Activated T-helper 1 cell treated with anti-CD3 and anti-CD28 coated beads, Interleukin-12 subunit alpha, Interleukin-12 subunit beta, Interleukin-2, Interleukin-4 antibody, amounts not matched to agents 30 ng/mL and 10 ng/mL and 1 ng/mL, durations not matched to agents 14 hours and 24 hours and 36 hours (primary cell): ENCODE measurements at regions of chr7 and their contacts with region 1.

Region 1: GRCh38 chr7:73667344-73668102 is at the start of gene VPS37D:
- DNase-seq: peak; percentile 91
- H3K4me3 Mint-ChIP-seq: peak within 1 kb of the TSS; percentile 78
- H3K27ac Mint-ChIP-seq: no peak within 1 kb of the TSS
- H3K4me1 Mint-ChIP-seq: peaks cover 7% of the 10 kb centered on the region
- H3K27me3 Mint-ChIP-seq: peaks cover 36% of the 10 kb centered on the region
- total RNA-seq, gene VPS37D: 0.18 and 0.34 TPM in 2 replicates

Region 2: DNA sequence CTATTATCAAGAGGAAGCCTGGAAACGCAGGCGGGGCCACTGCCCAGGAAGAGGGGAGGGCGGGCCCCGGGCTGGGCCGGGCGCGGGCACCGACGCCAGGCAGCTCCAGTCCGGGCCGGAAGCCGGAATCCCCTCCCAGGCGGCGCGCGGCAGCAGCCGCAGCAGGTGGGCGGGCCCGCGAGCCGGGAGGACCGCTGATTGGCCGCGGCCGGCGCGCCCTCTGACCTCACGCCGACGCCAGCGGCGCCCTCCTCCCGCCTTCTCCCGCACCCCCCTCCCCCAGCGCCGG is 110.5 kb before region 1 on chr7:
- intact Hi-C with region 1: loop called (anchors 1 kb)
- DNase-seq: peak; percentile 92
- H3K4me3 Mint-ChIP-seq: peak overlapping the region; percentile 94
- H3K27ac Mint-ChIP-seq: peak overlapping the region; percentile 79
- H3K4me1 Mint-ChIP-seq: peaks cover 38% of the 10 kb centered on the region
- H3K27me3 Mint-ChIP-seq: peaks cover 8% of the 10 kb centered on the region

Region 3: GRCh38 chr7:73606801-73607691 is 60.5 kb before region 1 on chr7:
- intact Hi-C with region 1: loop called (anchors 1 kb)
- DNase-seq: peak; percentile 42
- H3K4me3 Mint-ChIP-seq: no peak overlapping the region
- H3K27ac Mint-ChIP-seq: no peak overlapping the region
- H3K4me1 Mint-ChIP-seq: no peaks in the 10 kb centered on the region
- H3K27me3 Mint-ChIP-seq: peaks cover 17% of the 10 kb centered on the region

Region 4: DNA sequence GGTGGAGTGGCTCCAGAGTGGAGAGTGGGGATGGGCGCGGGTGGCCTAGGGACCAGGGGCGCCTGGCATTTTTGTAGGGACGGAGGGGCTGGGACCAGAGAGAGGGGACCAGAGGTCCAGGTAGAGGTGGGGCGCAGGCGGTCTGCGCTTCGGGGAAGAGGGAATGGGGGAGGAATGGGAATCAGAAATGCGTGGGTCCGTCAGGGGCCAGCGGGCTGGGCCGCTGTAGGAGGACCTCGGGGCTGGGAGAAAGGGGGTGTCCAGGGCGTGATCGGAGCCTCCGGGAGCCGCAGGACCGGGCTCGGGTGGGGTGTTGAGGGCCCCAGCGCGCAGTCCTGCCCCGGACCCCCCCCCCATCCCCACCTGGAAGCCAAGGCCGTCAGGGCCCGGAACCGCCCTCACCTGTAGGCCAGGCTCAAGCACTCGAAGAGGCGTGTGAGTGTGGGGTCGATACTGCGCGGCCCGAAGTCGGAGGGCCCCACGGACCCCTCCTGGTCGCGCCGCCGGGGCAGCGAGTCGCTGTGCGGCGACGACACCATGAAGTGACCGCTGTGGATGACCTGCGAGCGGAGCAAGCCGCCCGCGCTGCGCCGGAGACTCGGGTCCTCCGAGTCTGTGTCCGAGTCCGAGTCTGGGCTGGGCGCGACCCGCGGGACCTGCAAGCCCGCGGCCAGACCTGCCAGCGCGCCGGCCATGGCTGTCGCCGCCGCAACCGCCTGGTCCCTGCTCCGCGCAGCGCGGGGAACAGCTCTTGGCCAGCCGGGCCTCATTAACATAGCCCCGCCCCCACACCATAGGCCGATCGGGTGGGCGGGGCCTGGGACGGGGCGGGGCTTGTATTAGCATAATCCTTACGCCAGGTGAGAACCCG is 43.5 kb before region 1 on chr7 and contains the start of gene MLXIPL:
- intact Hi-C with region 1: loop called (anchors 1 kb)
- DNase-seq: peak; percentile 38
- H3K4me3 Mint-ChIP-seq: no peak within 1 kb of the TSS
- H3K27ac Mint-ChIP-seq: no peak within 1 kb of the TSS
- H3K4me1 Mint-ChIP-seq: no peaks in the 10 kb centered on the region
- H3K27me3 Mint-ChIP-seq: peaks cover 49% of the 10 kb centered on the region
- total RNA-seq, gene MLXIPL: not detected in 2 replicates